ENCODE measurements at regions of chr1 and their contacts with region 1.

Region 1: GRCh38 chr1:45018599-45019230 is 6.7 kb downstream of the UROD start:
- DNase-seq: peak; percentile 75
- ATAC-seq: peak; percentile 93
- H3K4me3 Mint-ChIP-seq: no peak overlapping the region
- H3K27ac Mint-ChIP-seq: no peak overlapping the region
- H3K4me1 Mint-ChIP-seq: peaks cover 10% of the 10 kb centered on the region
- H3K27me3 Mint-ChIP-seq: no peaks in the 10 kb centered on the region
- CTCF ChIP-seq: peak; percentile 78

Region 2: DNA sequence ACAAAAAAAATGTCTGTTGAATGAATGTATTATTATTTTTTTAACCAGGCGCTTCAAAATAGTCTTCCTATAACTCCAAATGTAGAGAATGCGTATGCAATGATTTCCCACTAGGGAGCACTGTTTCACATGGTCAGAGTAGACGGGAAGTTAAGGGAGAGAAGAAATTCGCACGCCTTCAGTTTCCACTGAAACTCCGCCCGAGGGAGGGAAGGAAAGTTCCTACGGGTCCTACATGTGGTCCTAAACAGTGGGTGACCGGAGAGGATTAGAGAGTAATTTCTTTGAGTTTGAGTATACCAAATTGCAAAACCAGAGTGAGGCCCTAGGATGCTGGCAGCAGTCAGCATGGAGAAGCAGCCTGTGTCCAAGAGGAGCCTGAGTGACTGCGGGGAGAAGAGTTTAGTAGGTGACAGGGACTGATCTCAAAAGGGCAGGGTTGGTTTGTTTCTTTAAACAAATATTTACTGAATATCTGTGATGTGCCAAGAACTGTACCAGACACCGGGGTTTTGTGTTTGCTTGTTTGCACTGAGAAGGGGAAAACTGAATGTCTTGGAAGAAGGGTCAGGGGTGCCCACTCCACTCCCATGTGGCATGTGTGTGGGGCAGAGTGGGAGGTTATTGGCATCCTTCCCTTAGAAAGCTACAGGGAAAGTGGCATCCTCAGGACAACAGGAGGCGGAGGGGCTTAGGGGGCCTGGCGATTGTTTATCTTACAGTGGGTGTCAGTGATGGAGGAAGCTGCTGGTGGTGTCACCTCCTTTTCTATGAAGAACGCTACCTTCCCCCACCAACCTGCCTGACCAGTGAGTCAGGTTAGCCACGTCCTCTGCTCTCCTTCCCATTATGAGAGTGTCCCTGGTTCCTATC is 310.5 kb before region 1 on chr1:
- CTCF ChIA-PET with region 1: no interaction called
- POLR2A ChIA-PET with region 1: no interaction called
- intact Hi-C with region 1: no loop called
- DNase-seq: peak; percentile 18
- ATAC-seq: peak; percentile 79
- H3K4me3 Mint-ChIP-seq: peak overlapping the region; percentile 42
- H3K27ac Mint-ChIP-seq: peak overlapping the region; percentile 40
- H3K4me1 Mint-ChIP-seq: peaks cover 13% of the 10 kb centered on the region
- H3K27me3 Mint-ChIP-seq: no peaks in the 10 kb centered on the region
- CTCF ChIP-seq: peak; percentile 87

Region 3: DNA sequence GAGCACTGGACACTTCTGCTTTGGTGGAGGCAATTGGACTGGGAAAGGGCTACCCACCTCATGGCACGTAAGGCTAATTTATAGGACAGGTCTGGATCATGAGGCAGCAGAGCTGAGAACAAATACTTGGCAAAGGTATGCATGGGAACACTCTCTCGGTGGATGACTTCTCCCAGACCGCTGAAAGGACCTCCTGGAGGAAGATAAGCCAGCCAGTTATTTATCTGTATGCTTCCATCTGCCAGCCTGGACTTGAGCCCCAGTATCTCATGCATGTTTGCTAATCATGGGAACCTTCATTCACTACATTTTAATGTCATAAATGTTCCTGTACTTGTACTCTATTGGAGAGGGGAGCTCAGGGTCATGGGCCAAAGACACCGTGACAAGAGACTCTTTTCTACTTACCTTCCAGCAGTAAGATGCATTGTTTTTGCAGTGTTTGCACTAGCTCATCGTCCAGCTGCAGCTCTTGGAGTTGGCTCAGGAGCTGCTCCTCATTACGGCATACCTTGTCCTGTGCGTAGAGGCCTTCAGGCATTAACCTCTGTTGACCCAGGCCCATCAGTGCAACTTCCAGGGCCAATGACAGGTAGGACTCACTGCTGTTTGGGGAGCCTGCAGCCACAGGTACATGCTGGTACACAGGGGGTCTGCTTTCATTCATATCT is 17.1 kb after region 1 on chr1:
- CTCF ChIA-PET with region 1: interaction called, 20 read pairs
- POLR2A ChIA-PET with region 1: interaction called, 3 read pairs
- intact Hi-C with region 1: no loop called
- DNase-seq: no peak
- ATAC-seq: no peak
- H3K4me3 Mint-ChIP-seq: no peak overlapping the region
- H3K27ac Mint-ChIP-seq: no peak overlapping the region
- H3K4me1 Mint-ChIP-seq: peaks cover 10% of the 10 kb centered on the region
- H3K27me3 Mint-ChIP-seq: no peaks in the 10 kb centered on the region
- CTCF ChIP-seq: no peak

Region 4: GRCh38 chr1:45059829-45060228 is 41.1 kb after region 1 on chr1:
- CTCF ChIA-PET with region 1: no interaction called
- POLR2A ChIA-PET with region 1: no interaction called
- intact Hi-C with region 1: no loop called
- DNase-seq: no peak
- ATAC-seq: no peak
- H3K4me3 Mint-ChIP-seq: no peak overlapping the region
- H3K27ac Mint-ChIP-seq: no peak overlapping the region
- H3K4me1 Mint-ChIP-seq: no peaks in the 10 kb centered on the region
- H3K27me3 Mint-ChIP-seq: no peaks in the 10 kb centered on the region
- CTCF ChIP-seq: no peak